MCF 10A (cell line): ENCODE measurements at regions of chr10 and their contacts with region 1.

Region 1: DNA sequence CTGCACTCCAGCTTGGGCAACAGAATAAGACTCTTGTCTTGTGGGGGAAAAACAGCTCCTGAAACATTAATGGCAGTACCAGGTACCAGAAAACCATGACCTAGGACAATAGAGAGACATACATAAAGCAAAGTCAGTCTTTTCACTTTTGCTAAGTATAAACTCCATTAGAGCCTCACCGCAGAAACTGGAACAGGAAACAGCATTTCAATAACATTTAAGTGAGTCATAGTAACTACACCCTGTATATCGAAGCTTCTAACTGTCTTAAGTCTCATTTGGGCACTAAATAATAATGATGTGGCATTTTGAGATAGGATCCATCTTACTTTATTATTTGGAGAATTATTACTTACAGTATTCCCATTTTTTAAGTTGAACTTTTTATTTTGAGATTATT is 517.8 kb upstream of the CELF2 start:
- DNase-seq: peak; percentile 45
- H3K4me3 Mint-ChIP-seq: no peak overlapping the region
- H3K27ac Mint-ChIP-seq: peak overlapping the region; percentile 59
- H3K4me1 Mint-ChIP-seq: peaks cover 23% of the 10 kb centered on the region
- H3K27me3 Mint-ChIP-seq: no peaks in the 10 kb centered on the region
- CTCF ChIP-seq: no peak

Region 2: DNA sequence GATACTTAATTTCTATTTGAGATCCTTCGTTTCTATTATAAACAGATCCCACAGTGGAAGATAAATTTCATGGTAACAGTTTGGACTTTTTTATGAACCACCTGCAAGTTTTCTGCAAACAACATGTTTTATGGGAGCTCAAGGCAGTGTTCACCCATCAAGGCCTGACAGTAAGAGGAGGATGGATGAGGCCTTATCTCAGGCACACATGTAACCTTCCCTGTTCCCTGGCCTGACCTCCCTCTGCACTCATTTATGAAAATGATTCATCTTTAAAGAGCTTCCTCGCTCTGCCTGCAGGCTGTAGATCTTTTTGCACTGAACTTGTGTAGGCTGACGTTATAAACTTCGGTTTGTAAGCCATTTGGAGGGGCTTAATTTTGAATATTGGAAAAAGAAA is 1945.3 kb before region 1 on chr10:
- CTCF ChIA-PET with region 1: no interaction called
- POLR2A ChIA-PET with region 1: no interaction called
- intact Hi-C with region 1: loop called (anchors 10 kb)
- DNase-seq: no peak
- H3K4me3 Mint-ChIP-seq: no peak overlapping the region
- H3K27ac Mint-ChIP-seq: no peak overlapping the region
- H3K4me1 Mint-ChIP-seq: peaks cover 9% of the 10 kb centered on the region
- H3K27me3 Mint-ChIP-seq: no peaks in the 10 kb centered on the region
- CTCF ChIP-seq: no peak